Caco-2 (cell line): ENCODE measurements at regions of chr3 and their contacts with region 1.

Region 1: GRCh38 chr3:82633319-82633718 is 871.9 kb upstream of the GBE1 start:
- DNase-seq: peak in 1 of 2 experiments; percentile 1
- H3K4me3 ChIP-seq: no peak overlapping the region
- H3K4me3 Mint-ChIP-seq: no peak overlapping the region
- H3K27ac Mint-ChIP-seq: no peak overlapping the region
- H3K4me1 ChIP-seq: peaks cover 7% of the 10 kb centered on the region; the same call in 1 of the 2 replicates
- H3K4me1 Mint-ChIP-seq: peaks cover 6% of the 10 kb centered on the region
- H3K27me3 ChIP-seq: no peaks in the 10 kb centered on the region
- H3K27me3 Mint-ChIP-seq: no peaks in the 10 kb centered on the region
- CTCF ChIP-seq: no peak

Region 2: GRCh38 chr3:82715091-82715856 is 82.0 kb after region 1 on chr3:
- CTCF ChIA-PET with region 1: no interaction called
- POLR2A ChIA-PET with region 1: no interaction called
- intact Hi-C with region 1: no loop called
- DNase-seq: no peak
- H3K4me3 ChIP-seq: no peak overlapping the region
- H3K4me3 Mint-ChIP-seq: no peak overlapping the region
- H3K27ac Mint-ChIP-seq: no peak overlapping the region
- H3K4me1 ChIP-seq: no peaks in the 10 kb centered on the region
- H3K4me1 Mint-ChIP-seq: no peaks in the 10 kb centered on the region
- H3K27me3 ChIP-seq: no peaks in the 10 kb centered on the region
- H3K27me3 Mint-ChIP-seq: no peaks in the 10 kb centered on the region
- CTCF ChIP-seq: no peak

Region 3: GRCh38 chr3:83233715-83234114 is 600.4 kb after region 1 on chr3:
- CTCF ChIA-PET with region 1: interaction called, 15 read pairs
- POLR2A ChIA-PET with region 1: no interaction called
- intact Hi-C with region 1: no loop called
- DNase-seq: no peak
- H3K4me3 ChIP-seq: no peak overlapping the region
- H3K4me3 Mint-ChIP-seq: no peak overlapping the region
- H3K27ac Mint-ChIP-seq: no peak overlapping the region
- H3K4me1 ChIP-seq: no peaks in the 10 kb centered on the region
- H3K4me1 Mint-ChIP-seq: no peaks in the 10 kb centered on the region
- H3K27me3 ChIP-seq: no peaks in the 10 kb centered on the region
- H3K27me3 Mint-ChIP-seq: no peaks in the 10 kb centered on the region
- CTCF ChIP-seq: no peak